IMR-90 (cell line): ENCODE measurements at regions of chr18 and their contacts with region 1.

Region 1: DNA sequence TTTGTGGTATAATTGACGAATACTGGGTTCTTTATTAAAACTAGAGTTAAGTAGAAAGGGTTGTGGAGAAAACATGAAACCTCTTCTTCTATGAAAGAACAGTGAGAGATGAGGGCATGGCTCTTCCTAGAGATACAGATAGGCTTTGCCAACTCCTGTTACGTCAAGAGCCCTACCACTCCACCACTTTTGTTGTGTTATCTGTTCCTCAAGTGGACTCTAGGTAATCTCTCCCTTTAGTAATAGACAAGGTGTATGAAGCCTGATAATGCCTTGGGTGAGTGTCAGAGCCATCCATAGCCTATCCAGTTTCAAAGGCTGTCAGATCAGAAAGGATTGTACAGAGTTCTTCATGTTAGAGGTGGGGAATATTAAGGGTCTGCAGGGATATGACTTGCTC is 176.4 kb downstream of the SETBP1 start:
- DNase-seq: no peak
- ATAC-seq: no peak
- H3K4me3 ChIP-seq: no peak overlapping the region
- H3K27ac ChIP-seq: no peak overlapping the region
- H3K4me1 ChIP-seq: no peaks in the 10 kb centered on the region; the same call in 1 of the 2 replicates
- H3K27me3 ChIP-seq: peaks cover 2% of the 10 kb centered on the region; the same call in 1 of the 2 replicates
- CTCF ChIP-seq: no peak
- POLR2A ChIP-seq: no peak
- RAD21 ChIP-seq: no peak

Region 2: GRCh38 chr18:44594799-44595467 is 262.1 kb before region 1 on chr18:
- CTCF ChIA-PET with region 1: no interaction called
- POLR2A ChIA-PET with region 1: no interaction called
- dilution Hi-C with region 1: no loop called
- in situ Hi-C with region 1: no loop called
- intact Hi-C with region 1: no loop called
- DNase-seq: peak; percentile 59
- ATAC-seq: peak; percentile 61
- H3K4me3 ChIP-seq: no peak overlapping the region
- H3K27ac ChIP-seq: no peak overlapping the region
- H3K4me1 ChIP-seq: peaks cover under 1% of the 10 kb centered on the region
- H3K27me3 ChIP-seq: no peaks in the 10 kb centered on the region
- CTCF ChIP-seq: no peak
- POLR2A ChIP-seq: no peak
- RAD21 ChIP-seq: no peak

Region 3: DNA sequence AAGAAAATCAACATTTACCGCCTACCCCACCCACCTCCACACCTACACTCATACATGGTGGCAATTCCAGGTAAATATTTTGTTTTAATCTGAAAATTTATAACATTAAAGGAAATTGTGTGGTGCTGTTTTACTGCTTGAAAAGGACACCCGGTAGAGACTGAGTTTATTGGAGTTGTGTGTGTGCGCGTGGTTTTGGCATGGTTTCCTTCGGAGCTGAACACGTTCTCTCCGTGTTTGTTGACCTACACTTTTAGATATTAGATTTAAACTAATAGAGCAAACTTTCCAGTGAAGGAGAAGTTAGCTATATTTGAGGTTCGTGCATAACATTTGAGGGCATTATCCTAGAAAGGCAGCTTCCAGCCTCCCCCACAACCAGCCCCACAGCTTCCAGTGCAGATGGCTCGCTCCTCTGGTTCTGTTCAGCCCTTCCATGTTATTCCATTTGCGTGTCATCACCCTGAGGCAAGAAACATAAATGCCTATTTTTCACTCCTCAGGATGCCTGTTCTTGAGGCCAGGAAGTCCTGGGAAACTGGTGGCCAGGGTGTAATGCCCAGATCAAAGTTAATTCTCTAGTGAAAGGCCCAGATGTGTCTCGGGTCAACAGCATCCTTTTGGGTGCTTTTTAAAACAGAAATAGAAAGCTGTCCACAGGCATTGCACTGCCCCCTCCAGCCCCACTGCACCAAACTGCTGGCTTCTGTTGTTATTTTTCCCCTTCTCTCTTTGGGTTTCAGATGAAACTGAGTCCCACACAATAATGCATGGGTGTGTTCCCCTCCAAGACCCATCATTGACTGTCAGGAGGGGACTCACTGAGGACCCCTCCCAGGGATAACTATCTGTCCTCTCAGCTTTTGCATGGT is 13.8 kb after region 1 on chr18:
- CTCF ChIA-PET with region 1: no interaction called
- POLR2A ChIA-PET with region 1: interaction called, 14 read pairs
- dilution Hi-C with region 1: no loop called
- in situ Hi-C with region 1: no loop called
- intact Hi-C with region 1: no loop called
- DNase-seq: no peak
- ATAC-seq: no peak
- H3K4me3 ChIP-seq: no peak overlapping the region
- H3K27ac ChIP-seq: no peak overlapping the region
- H3K4me1 ChIP-seq: no peaks in the 10 kb centered on the region
- H3K27me3 ChIP-seq: no peaks in the 10 kb centered on the region
- CTCF ChIP-seq: no peak
- POLR2A ChIP-seq: no peak
- RAD21 ChIP-seq: no peak